A549 (cell line): ENCODE measurements at regions of chr17 and their contacts with region 1.

Region 1: GRCh38 chr17:75271233-75271954 is 363 bp upstream of the MIF4GD start:
- DNase-seq: peak; percentile 80 to 91
- ATAC-seq: peak; percentile 61 to 63
- H3K4me3 ChIP-seq: peak overlapping the region; percentile 93
- H3K27ac ChIP-seq: peak overlapping the region; percentile 95 to 96
- H3K4me1 ChIP-seq: peaks cover 26% of the 10 kb centered on the region
- CTCF ChIP-seq: peak; percentile 92
- EP300 ChIP-seq: no peak
- POLR2A ChIP-seq: peak; percentile 78
- RAD21 ChIP-seq: peak; percentile 16 to 49; a peak in 3 of 5 replicates

Region 2: GRCh38 chr17:75238684-75239191 is 32.7 kb before region 1 on chr17:
- CTCF ChIA-PET with region 1: interaction called, 62 read pairs
- POLR2A ChIA-PET with region 1: interaction called, 7 read pairs
- DNase-seq: peak; percentile 89 to 96
- ATAC-seq: peak; percentile 71 to 84
- H3K4me3 ChIP-seq: no peak overlapping the region
- H3K27ac ChIP-seq: no peak overlapping the region
- H3K4me1 ChIP-seq: 0 out of 3 replicates have a peak, but pooled peaks cover 6% of the 10 kb centered on the region
- CTCF ChIP-seq: peak; percentile 92
- EP300 ChIP-seq: no peak
- POLR2A ChIP-seq: no peak
- RAD21 ChIP-seq: peak; percentile 57 to 64

Region 3: GRCh38 chr17:75289115-75289831 is 17.9 kb after region 1 on chr17 and contains the start of gene SLC25A19:
- CTCF ChIA-PET with region 1: interaction called, 110 read pairs
- POLR2A ChIA-PET with region 1: interaction called, 81 read pairs
- DNase-seq: peak; percentile 100
- ATAC-seq: peak; percentile 97 to 99
- H3K4me3 ChIP-seq: peak within 1 kb of the TSS; percentile 72
- H3K27ac ChIP-seq: peak within 1 kb of the TSS; percentile 86 to 90
- H3K4me1 ChIP-seq: peaks cover 12% of the 10 kb centered on the region
- CTCF ChIP-seq: no peak
- EP300 ChIP-seq: no peak
- POLR2A ChIP-seq: peak; percentile 95
- RAD21 ChIP-seq: peak; percentile 15 to 22; a peak in 2 of 5 replicates
- polyA plus RNA-seq, gene SLC25A19: 14.8 and 15.3 TPM in 2 replicates

Region 4: DNA sequence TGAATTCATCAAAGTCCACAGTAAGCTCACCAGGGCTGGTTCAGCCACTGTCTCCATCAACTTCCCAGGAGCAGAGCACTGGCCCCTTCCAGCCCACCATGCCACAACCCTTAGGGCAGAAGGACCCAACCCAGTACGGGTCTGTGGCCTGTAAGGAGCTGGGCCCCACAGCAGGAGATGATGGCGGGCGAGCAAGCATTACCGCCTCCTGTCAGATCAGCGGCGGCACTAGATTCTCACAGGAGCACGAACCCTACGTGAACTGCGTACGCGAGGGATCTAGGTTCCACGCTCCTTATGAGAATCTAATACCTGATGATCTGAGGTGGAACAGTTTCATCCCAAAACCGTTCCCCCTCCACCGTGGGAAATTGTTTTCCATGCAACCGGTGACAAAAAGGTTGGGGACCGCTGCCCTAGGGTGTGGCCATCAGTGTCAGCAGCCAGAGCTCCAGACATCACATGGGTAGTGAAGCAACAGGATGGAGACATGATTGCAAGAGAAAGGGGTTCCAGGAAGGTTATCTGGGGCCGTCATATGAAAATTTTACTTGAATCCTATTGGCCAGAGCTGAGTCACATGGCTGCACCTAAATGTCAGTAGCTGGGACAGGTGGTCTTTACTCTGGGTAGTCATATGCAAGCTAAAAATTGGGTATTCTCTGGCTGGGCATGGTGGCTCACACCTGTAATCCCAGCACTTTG is 30.3 kb after region 1 on chr17:
- CTCF ChIA-PET with region 1: interaction called, 12 read pairs
- POLR2A ChIA-PET with region 1: no interaction called
- DNase-seq: no peak
- ATAC-seq: no peak; a peak in 1 of 6 replicates
- H3K4me3 ChIP-seq: no peak overlapping the region
- H3K27ac ChIP-seq: no peak overlapping the region
- H3K4me1 ChIP-seq: no peaks in the 10 kb centered on the region
- CTCF ChIP-seq: no peak
- EP300 ChIP-seq: no peak
- POLR2A ChIP-seq: no peak
- RAD21 ChIP-seq: no peak

Region 5: GRCh38 chr17:75393523-75394331 is 122.3 kb after region 1 on chr17:
- CTCF ChIA-PET with region 1: interaction called, 13 read pairs
- POLR2A ChIA-PET with region 1: interaction called, 13 read pairs
- DNase-seq: peak; percentile 98 to 99
- ATAC-seq: peak; percentile 99 to 100
- H3K4me3 ChIP-seq: peak overlapping the region; percentile 62
- H3K27ac ChIP-seq: peak overlapping the region; percentile 80 to 88
- H3K4me1 ChIP-seq: peaks cover 30% of the 10 kb centered on the region
- CTCF ChIP-seq: no peak
- EP300 ChIP-seq: no peak
- POLR2A ChIP-seq: peak; percentile 79
- RAD21 ChIP-seq: 0 out of 5 replicates have a peak, but pooled peaks of 1 of the 2 experiments have one; percentile 17

Region 6: DNA sequence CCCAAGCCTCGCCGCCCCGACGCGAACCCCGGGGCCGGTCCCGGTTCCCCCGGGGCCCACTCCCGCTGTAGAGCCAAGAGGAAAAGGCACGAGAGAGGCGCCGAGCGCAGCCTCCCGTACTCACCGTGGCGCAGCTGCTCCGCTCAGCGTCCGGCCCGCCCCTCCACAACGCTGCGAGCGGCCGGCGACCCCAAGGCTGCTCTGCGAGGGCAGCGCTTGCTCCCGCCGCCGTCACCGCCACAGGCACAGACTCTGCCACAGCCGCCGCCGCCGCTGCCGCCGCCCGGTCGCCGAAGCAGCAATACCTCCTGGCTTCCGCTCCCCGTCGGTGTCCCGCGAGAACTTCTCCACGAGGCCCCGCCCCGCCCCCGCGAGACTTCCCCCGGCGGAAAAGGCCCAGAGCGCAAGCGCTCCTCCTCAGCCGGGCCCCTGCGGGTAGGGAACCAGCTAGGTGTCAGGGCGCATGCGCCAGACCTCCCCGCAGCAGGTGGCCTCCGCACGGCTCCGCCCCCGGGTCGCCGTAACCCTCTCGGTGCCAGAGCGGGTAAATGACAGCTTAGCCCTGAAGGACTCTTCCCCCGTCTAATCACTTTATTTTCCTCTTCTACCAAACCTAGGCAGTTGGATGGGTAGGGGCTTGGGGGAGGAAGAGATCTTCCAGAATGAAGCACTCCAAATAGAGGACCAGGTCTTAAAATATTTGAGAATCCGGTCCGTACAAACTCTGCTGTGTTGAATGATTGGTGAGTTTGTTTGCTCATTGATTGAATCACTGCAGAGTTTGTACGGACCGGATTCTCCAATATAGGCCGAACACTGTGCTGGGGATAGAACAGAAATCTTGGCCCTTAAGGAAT is 134.2 kb after region 1 on chr17 and contains the start of gene GRB2:
- CTCF ChIA-PET with region 1: interaction called, 19 read pairs
- POLR2A ChIA-PET with region 1: interaction called, 14 read pairs
- DNase-seq: peak; percentile 97 to 99
- ATAC-seq: peak; percentile 82 to 92
- H3K4me3 ChIP-seq: peak within 1 kb of the TSS; percentile 96
- H3K27ac ChIP-seq: peak within 1 kb of the TSS; percentile 91 to 95
- H3K4me1 ChIP-seq: peaks cover 13% of the 10 kb centered on the region; the same call in 1 of the 3 replicates
- CTCF ChIP-seq: no peak
- EP300 ChIP-seq: no peak
- POLR2A ChIP-seq: peak; percentile 93
- RAD21 ChIP-seq: no peak
- polyA plus RNA-seq, gene GRB2: 87.5 and 91.4 TPM in 2 replicates

Region 7: GRCh38 chr17:75430159-75430974 is 159.0 kb after region 1 on chr17:
- CTCF ChIA-PET with region 1: interaction called, 11 read pairs
- POLR2A ChIA-PET with region 1: interaction called, 3 read pairs
- DNase-seq: peak; percentile 90 to 91
- ATAC-seq: peak; percentile 66 to 84; a peak in 5 of 6 replicates
- H3K4me3 ChIP-seq: peak overlapping the region; percentile 17; the same call in 2 of the 3 replicates
- H3K27ac ChIP-seq: peak overlapping the region; percentile 80 to 89
- H3K4me1 ChIP-seq: peaks cover 35% of the 10 kb centered on the region
- CTCF ChIP-seq: no peak
- EP300 ChIP-seq: no peak
- POLR2A ChIP-seq: 0 out of 2 replicates have a peak, but pooled peaks have one; percentile 15
- RAD21 ChIP-seq: no peak